ENCODE measurements at regions of chr14 and their contacts with region 1.

Region 1: DNA sequence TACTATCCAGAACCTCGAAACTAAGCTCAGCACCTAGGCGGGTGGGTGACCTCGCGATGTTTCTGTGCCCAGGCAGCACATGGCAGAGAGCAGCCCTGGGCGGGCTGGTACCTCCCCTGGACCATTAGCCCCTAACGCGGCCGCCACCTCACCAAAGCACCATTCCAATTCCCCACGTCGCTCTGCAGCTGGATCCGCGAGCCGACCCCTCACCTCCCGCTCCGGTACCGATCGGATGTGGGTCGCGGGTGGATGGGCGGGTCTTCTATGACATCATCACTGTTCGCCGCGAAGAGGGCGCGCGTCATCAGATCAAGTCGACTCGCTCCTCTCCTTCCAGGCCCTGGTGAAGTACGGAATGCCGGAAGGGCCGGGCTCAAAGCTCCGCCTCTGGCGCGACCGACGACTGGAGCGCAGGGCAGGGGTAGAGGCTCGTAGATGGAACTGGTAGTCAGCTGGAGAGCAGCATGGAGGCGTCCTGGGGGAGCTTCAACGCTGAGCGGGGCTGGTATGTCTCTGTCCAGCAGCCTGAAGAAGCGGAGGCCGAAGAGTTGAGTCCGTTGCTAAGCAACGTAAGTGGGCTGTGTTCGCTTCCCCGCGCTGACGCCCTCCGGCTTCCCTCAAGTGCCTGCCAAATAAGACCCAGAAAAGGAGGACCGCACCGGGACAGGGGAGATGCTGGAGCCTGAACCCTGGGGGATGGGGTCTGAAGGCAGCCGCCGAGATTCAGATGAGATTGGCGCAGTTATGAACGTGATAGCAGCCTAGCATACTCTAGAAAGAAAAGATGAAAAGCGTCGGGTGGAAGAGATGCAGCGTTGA is at the starts of genes SLC38A6 and TRMT5:
- DNase-seq: peak; percentile 95
- H3K4me3 Mint-ChIP-seq: no peak within 1 kb of the TSS
- H3K27ac Mint-ChIP-seq: no peak within 1 kb of the TSS
- H3K4me1 Mint-ChIP-seq: peaks cover 16% of the 10 kb centered on the region
- H3K27me3 Mint-ChIP-seq: no peaks in the 10 kb centered on the region
- CTCF ChIP-seq: no peak
- total RNA-seq, gene SLC38A6: 7.9 and 12.6 TPM in 2 replicates
- total RNA-seq, gene TRMT5: 15.7 and 17.5 TPM in 2 replicates

Region 2: GRCh38 chr14:60632257-60632656 is 348.8 kb before region 1 on chr14:
- CTCF ChIA-PET with region 1: interaction called, 4 read pairs
- POLR2A ChIA-PET with region 1: no interaction called
- intact Hi-C with region 1: loop called (anchors 5 kb)
- DNase-seq: no peak
- H3K4me3 Mint-ChIP-seq: no peak overlapping the region
- H3K27ac Mint-ChIP-seq: no peak overlapping the region
- H3K4me1 Mint-ChIP-seq: no peaks in the 10 kb centered on the region
- H3K27me3 Mint-ChIP-seq: no peaks in the 10 kb centered on the region
- CTCF ChIP-seq: no peak

Region 3: GRCh38 chr14:60734465-60735242 is 246.4 kb before region 1 on chr14 and contains the start of gene MNAT1:
- CTCF ChIA-PET with region 1: no interaction called
- POLR2A ChIA-PET with region 1: interaction called, 27 read pairs
- intact Hi-C with region 1: no loop called
- DNase-seq: peak; percentile 82
- H3K4me3 Mint-ChIP-seq: peak within 1 kb of the TSS; percentile 94
- H3K27ac Mint-ChIP-seq: peak within 1 kb of the TSS; percentile 92
- H3K4me1 Mint-ChIP-seq: peaks cover 19% of the 10 kb centered on the region
- H3K27me3 Mint-ChIP-seq: no peaks in the 10 kb centered on the region
- CTCF ChIP-seq: no peak
- total RNA-seq, gene MNAT1: 45.2 and 57.5 TPM in 2 replicates

Region 4: GRCh38 chr14:60968099-60968498 is 12.9 kb before region 1 on chr14:
- CTCF ChIA-PET with region 1: interaction called, 4 read pairs
- POLR2A ChIA-PET with region 1: interaction called, 19 read pairs
- intact Hi-C with region 1: no loop called
- DNase-seq: no peak
- H3K4me3 Mint-ChIP-seq: no peak overlapping the region
- H3K27ac Mint-ChIP-seq: no peak overlapping the region
- H3K4me1 Mint-ChIP-seq: no peaks in the 10 kb centered on the region
- H3K27me3 Mint-ChIP-seq: no peaks in the 10 kb centered on the region
- CTCF ChIP-seq: no peak

Region 5: DNA sequence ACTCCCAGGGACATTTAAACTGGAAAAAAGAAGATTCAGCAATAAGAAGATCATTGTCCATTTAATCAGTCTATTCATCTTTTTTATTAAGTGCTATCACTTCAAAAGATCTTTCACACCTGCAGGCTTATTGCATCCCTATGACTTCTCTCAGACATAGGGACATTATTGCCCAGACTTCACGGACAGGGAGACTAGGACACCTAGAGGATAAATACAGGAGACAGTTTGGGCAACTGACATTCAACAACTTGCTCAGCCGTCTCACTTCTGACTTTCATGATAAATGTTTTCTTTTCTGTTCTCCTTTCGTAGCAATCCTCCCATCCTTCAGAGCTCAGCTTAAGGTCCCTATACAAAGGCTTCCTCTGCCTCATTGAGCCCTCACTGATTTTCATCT is 215.8 kb after region 1 on chr14:
- CTCF ChIA-PET with region 1: interaction called, 3 read pairs
- POLR2A ChIA-PET with region 1: interaction called, 5 read pairs
- intact Hi-C with region 1: loop called (anchors 2 kb)
- DNase-seq: peak; percentile 59
- H3K4me3 Mint-ChIP-seq: no peak overlapping the region
- H3K27ac Mint-ChIP-seq: no peak overlapping the region
- H3K4me1 Mint-ChIP-seq: no peaks in the 10 kb centered on the region
- H3K27me3 Mint-ChIP-seq: no peaks in the 10 kb centered on the region
- CTCF ChIP-seq: peak; percentile 40

Region 6: GRCh38 chr14:61598980-61599379 is 618.0 kb after region 1 on chr14:
- CTCF ChIA-PET with region 1: no interaction called
- POLR2A ChIA-PET with region 1: no interaction called
- intact Hi-C with region 1: no loop called
- DNase-seq: no peak
- H3K4me3 Mint-ChIP-seq: no peak overlapping the region
- H3K27ac Mint-ChIP-seq: no peak overlapping the region
- H3K4me1 Mint-ChIP-seq: peaks cover 18% of the 10 kb centered on the region
- H3K27me3 Mint-ChIP-seq: no peaks in the 10 kb centered on the region
- CTCF ChIP-seq: no peak

Region 7: DNA sequence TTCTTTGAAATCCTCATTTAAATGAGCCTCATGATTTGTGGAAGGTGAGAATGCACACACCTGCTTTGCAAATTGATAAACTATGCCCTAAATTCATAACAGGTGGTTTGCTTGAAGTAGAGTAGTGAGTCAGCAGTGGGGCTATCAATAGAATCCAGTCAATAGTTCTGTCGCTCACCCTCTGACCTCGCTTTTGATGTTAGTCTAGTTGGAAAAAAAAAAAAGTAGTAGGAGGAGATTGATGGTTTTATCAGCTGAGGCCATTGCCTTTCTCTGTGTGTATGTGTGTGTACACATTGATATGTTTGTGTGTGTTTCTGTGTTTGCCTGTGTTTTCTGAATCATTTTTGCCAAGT is 1048.5 kb after region 1 on chr14:
- CTCF ChIA-PET with region 1: no interaction called
- POLR2A ChIA-PET with region 1: no interaction called
- intact Hi-C with region 1: no loop called
- DNase-seq: no peak
- H3K4me3 Mint-ChIP-seq: no peak overlapping the region
- H3K27ac Mint-ChIP-seq: no peak overlapping the region
- H3K4me1 Mint-ChIP-seq: no peaks in the 10 kb centered on the region
- H3K27me3 Mint-ChIP-seq: no peaks in the 10 kb centered on the region
- CTCF ChIP-seq: no peak

Measured in MCF 10A (cell line).